Mammary epithelial cell (primary cell): ENCODE measurements at regions of chr11 and their contacts with region 1.

Region 1: GRCh38 chr11:59680287-59681154 is 11.7 kb upstream of the PATL1 start:
- DNase-seq: peak; percentile 64
- H3K4me3 ChIP-seq: no peak overlapping the region
- H3K27ac ChIP-seq: no peak overlapping the region
- H3K4me1 ChIP-seq: peaks cover 7% of the 10 kb centered on the region
- H3K27me3 ChIP-seq: no peaks in the 10 kb centered on the region
- CTCF ChIP-seq: peak; percentile 82 to 85

Region 2: DNA sequence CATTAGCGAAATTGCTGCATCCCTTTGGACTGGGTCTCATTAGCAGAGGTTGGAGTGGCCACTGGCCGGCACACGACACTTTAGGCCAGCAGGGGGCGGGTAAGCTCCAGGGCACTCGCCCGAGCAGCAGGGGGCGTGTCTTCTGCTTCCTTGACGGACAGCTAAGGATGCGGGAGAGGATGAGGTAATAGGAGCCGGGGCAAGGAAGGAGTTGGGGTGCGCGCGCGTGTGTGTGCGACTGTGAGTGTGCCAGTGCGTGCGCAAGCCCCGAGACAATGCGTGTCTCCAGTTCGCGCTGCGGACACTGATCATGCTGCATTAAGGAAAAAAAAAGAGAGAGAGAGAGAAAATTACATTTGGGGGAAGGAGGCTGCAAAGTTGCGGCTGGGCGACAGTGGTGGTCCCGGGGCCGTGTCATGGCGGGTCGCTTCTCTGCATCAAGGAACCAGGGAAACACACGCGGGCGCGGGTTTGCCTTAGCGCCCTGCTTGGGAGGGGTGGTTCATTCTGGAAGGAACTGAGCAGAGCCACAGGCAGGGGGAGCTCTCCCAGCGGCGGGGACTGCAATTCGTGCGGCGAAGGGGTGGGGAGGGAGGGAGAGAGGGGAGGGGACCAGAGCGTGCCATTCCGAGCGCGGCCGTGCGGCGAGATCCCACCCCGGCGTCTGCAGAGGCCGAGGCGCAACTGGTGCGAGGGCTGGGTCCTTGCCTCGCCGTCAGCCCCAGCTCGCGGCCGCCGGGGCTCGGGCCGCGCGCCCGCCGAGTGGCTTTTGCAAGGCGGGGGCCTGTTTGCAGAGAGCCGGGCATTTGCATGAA is 508.8 kb before region 1 on chr11 and contains the start of gene DTX4:
- CTCF ChIA-PET with region 1: no interaction called
- dilution Hi-C with region 1: no loop called
- in situ Hi-C with region 1: no loop called
- intact Hi-C with region 1: loop called (anchors 1 kb)
- DNase-seq: peak; percentile 76
- H3K4me3 ChIP-seq: peak within 1 kb of the TSS; percentile 63 to 70 (median 64)
- H3K27ac ChIP-seq: peak within 1 kb of the TSS; percentile 92
- H3K4me1 ChIP-seq: peaks cover 42% of the 10 kb centered on the region
- H3K27me3 ChIP-seq: no peaks in the 10 kb centered on the region
- CTCF ChIP-seq: peak; percentile 85 to 86
- total RNA-seq, gene DTX4: 10.4 to 11.5 TPM

Region 3: DNA sequence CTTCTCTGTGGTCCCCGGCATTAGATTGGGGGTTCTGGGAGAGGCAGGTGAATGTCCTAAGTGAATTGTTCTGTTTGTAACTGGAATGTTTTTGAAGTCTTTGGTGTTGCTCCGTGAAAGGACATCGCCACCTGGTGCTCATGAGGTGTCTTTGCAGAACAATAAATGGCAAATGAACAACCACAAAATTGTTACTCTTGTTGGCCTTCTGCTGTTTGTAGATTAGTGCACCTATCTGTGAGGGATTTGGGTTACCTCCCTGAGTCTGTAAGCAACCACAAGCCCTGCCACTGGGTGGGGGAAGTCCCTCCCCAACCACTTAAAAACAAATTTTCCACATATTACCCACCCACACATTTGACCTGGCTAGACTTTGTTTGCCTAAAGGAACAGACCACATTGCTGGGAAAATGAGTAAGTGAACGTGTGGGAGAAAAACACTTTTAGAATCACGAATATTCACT is 472.5 kb before region 1 on chr11:
- CTCF ChIA-PET with region 1: no interaction called
- dilution Hi-C with region 1: no loop called
- in situ Hi-C with region 1: no loop called
- intact Hi-C with region 1: loop called (anchors 5 kb)
- DNase-seq: peak; percentile 74
- H3K4me3 ChIP-seq: no peak overlapping the region
- H3K27ac ChIP-seq: no peak overlapping the region
- H3K4me1 ChIP-seq: peaks cover 7% of the 10 kb centered on the region
- H3K27me3 ChIP-seq: no peaks in the 10 kb centered on the region
- CTCF ChIP-seq: peak; percentile 64 to 76

Region 4: GRCh38 chr11:59283825-59284772 is 396.4 kb before region 1 on chr11:
- CTCF ChIA-PET with region 1: no interaction called
- dilution Hi-C with region 1: no loop called
- in situ Hi-C with region 1: no loop called
- intact Hi-C with region 1: loop called (anchors 1 kb)
- DNase-seq: peak; percentile 31
- H3K4me3 ChIP-seq: no peak overlapping the region
- H3K27ac ChIP-seq: no peak overlapping the region
- H3K4me1 ChIP-seq: no peaks in the 10 kb centered on the region
- H3K27me3 ChIP-seq: no peaks in the 10 kb centered on the region
- CTCF ChIP-seq: peak; percentile 59 to 80

Region 5: DNA sequence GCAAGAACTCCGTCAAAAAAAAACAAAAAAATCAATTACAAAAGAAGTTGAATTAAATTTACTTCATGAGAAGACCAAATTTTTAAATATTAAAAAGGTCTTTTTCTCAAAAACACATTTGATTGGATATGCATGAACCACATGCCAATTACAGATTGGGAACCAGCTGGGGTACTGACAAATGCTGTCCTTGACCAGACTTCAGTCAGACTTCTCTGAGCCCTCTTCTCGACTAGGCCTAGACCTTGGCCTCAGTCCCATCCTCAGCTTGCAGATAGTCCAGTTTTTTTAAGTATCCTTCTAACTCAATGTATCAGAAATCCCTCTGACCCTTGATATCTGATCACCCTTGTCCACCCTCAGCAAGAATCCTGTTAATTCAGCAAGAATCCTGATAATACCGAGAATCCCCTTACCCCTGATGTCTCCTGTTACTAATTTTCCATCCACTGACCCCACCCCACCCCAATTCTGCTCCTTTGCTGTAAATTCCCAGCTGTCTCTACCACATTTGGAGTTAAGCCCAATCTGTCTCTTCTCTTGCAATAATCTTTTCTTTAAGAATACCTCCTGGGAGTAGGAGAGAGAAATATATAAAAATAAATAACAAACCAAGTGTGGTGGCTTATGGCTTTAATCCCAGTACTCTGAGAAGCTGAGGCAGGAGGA is 138.2 kb before region 1 on chr11:
- CTCF ChIA-PET with region 1: no interaction called
- dilution Hi-C with region 1: no loop called
- in situ Hi-C with region 1: no loop called
- intact Hi-C with region 1: loop called (anchors 1 kb)
- DNase-seq: no peak
- H3K4me3 ChIP-seq: no peak overlapping the region
- H3K27ac ChIP-seq: no peak overlapping the region
- H3K4me1 ChIP-seq: no peaks in the 10 kb centered on the region
- H3K27me3 ChIP-seq: no peaks in the 10 kb centered on the region
- CTCF ChIP-seq: no peak

Region 6: DNA sequence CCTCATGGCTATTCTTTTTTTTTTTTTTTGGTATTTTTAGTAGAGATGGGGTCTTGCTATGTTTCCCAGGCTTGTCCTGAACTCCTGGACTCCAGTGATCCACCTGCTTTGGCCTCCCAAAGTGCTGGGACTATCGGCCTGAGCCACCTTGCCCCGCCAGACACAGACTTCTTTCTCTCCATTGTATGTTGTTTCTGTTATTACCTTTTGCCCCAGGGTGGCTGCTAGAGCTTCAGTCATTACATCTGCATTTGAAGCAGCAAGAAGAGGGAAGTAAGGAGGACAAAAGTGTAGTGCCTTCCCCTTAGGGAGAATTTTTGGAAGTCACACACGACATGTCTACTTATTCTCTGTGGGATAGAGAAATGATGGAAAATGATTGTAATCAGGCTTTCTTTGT is 54.8 kb before region 1 on chr11:
- CTCF ChIA-PET with region 1: no interaction called
- dilution Hi-C with region 1: loop called (anchors 5 kb)
- in situ Hi-C with region 1: no loop called
- intact Hi-C with region 1: no loop called
- DNase-seq: no peak
- H3K4me3 ChIP-seq: no peak overlapping the region
- H3K27ac ChIP-seq: no peak overlapping the region
- H3K4me1 ChIP-seq: no peaks in the 10 kb centered on the region
- H3K27me3 ChIP-seq: no peaks in the 10 kb centered on the region
- CTCF ChIP-seq: no peak

Region 7: DNA sequence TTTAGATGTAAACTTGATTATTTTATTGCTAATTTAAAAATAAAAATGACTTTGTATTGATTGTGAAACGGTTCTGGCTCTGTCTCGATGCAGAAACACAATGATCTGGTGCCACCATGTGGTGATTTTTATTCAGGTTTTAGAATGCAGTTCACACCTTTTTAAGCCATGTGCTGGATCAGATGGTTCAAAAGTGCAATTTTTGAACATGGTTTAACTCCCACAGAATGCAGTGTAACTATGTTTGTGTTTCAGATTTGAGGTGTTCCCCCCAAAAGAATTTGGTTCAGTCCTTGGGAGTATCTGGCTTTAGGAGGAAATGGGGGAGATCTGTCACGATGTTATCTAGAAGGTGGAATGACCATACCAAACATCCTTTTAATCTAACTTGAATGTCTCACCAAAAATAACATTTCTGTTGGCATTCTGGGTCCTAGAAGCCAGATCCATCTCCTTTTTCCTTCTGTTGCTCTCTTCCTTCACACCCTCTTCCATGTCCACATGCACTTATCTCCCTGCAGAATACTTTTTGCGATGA is 122.2 kb after region 1 on chr11:
- CTCF ChIA-PET with region 1: no interaction called
- dilution Hi-C with region 1: no loop called
- in situ Hi-C with region 1: no loop called
- intact Hi-C with region 1: loop called (anchors 5 kb)
- DNase-seq: peak; percentile 44
- H3K4me3 ChIP-seq: no peak overlapping the region
- H3K27ac ChIP-seq: no peak overlapping the region
- H3K4me1 ChIP-seq: peaks cover 6% of the 10 kb centered on the region
- H3K27me3 ChIP-seq: no peaks in the 10 kb centered on the region
- CTCF ChIP-seq: peak; percentile 59 to 67

Region 8: DNA sequence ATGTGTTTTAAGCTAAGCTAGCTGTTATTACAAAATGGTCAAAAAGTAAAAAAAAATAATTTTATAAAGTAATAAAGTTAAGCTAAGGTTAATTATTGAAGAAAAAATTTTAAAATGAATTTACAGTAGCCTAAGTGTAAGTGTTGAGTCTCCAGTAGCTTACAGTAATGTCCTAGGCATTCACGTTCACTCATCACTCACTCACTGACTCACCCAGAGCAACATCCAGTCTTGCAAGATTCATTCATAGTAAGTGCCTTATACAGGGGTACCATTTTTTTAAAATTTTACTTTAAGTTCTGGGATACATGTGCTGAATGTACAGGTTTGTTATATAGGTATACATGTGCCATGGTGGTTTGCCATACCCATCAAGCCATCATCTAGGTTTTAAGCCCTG is 324.8 kb after region 1 on chr11:
- CTCF ChIA-PET with region 1: no interaction called
- dilution Hi-C with region 1: no loop called
- in situ Hi-C with region 1: no loop called
- intact Hi-C with region 1: no loop called
- DNase-seq: peak; percentile 65
- H3K4me3 ChIP-seq: no peak overlapping the region
- H3K27ac ChIP-seq: no peak overlapping the region
- H3K4me1 ChIP-seq: no peaks in the 10 kb centered on the region
- H3K27me3 ChIP-seq: no peaks in the 10 kb centered on the region
- CTCF ChIP-seq: no peak